Caco-2 (cell line): ENCODE measurements at regions of chr20 and their contacts with region 1.

Region 1: GRCh38 chr20:22490287-22491193 is 93.8 kb downstream of the FOXA2 start:
- DNase-seq: peak; percentile 98
- H3K4me3 ChIP-seq: peak overlapping the region; percentile 11
- H3K4me3 Mint-ChIP-seq: peak overlapping the region; percentile 68
- H3K27ac Mint-ChIP-seq: peak overlapping the region; percentile 98
- H3K4me1 ChIP-seq: peaks cover 32% of the 10 kb centered on the region
- H3K4me1 Mint-ChIP-seq: peaks cover 30% of the 10 kb centered on the region
- H3K27me3 ChIP-seq: no peaks in the 10 kb centered on the region
- H3K27me3 Mint-ChIP-seq: no peaks in the 10 kb centered on the region
- CTCF ChIP-seq: peak; percentile 11 to 30

Region 2: GRCh38 chr20:22207280-22207679 is 283.3 kb before region 1 on chr20:
- CTCF ChIA-PET with region 1: no interaction called
- POLR2A ChIA-PET with region 1: no interaction called
- intact Hi-C with region 1: no loop called
- DNase-seq: peak in 1 of 2 experiments; percentile 4
- H3K4me3 ChIP-seq: no peak overlapping the region
- H3K4me3 Mint-ChIP-seq: no peak overlapping the region
- H3K27ac Mint-ChIP-seq: no peak overlapping the region
- H3K4me1 ChIP-seq: no peaks in the 10 kb centered on the region
- H3K4me1 Mint-ChIP-seq: no peaks in the 10 kb centered on the region
- H3K27me3 ChIP-seq: no peaks in the 10 kb centered on the region
- H3K27me3 Mint-ChIP-seq: peaks cover 11% of the 10 kb centered on the region
- CTCF ChIP-seq: no peak

Region 3: DNA sequence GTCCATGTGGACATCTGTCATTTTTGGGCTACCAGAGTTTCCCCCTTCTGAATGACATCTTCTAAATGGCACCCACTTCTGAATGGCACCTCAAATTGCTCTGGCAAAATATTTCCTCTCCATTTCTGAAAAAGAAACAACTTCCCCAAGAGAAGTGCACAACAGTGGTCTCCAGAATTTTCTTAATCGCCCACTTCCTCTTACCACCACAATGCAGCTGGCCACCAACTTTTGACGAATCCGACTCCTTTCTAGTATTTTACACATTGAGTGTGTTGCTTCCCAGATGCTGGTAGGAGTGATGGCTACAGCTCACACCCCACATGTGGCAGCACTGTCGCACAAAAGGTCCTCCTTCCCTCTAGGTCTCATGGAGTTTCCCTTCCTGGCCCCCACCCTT is 122.3 kb before region 1 on chr20:
- CTCF ChIA-PET with region 1: no interaction called
- POLR2A ChIA-PET with region 1: no interaction called
- intact Hi-C with region 1: no loop called
- DNase-seq: no peak
- H3K4me3 ChIP-seq: no peak overlapping the region
- H3K4me3 Mint-ChIP-seq: no peak overlapping the region
- H3K27ac Mint-ChIP-seq: no peak overlapping the region
- H3K4me1 ChIP-seq: no peaks in the 10 kb centered on the region
- H3K4me1 Mint-ChIP-seq: no peaks in the 10 kb centered on the region
- H3K27me3 ChIP-seq: peaks cover 1% of the 10 kb centered on the region; the same call in 1 of the 2 replicates
- H3K27me3 Mint-ChIP-seq: peaks cover 2% of the 10 kb centered on the region
- CTCF ChIP-seq: no peak

Region 4: DNA sequence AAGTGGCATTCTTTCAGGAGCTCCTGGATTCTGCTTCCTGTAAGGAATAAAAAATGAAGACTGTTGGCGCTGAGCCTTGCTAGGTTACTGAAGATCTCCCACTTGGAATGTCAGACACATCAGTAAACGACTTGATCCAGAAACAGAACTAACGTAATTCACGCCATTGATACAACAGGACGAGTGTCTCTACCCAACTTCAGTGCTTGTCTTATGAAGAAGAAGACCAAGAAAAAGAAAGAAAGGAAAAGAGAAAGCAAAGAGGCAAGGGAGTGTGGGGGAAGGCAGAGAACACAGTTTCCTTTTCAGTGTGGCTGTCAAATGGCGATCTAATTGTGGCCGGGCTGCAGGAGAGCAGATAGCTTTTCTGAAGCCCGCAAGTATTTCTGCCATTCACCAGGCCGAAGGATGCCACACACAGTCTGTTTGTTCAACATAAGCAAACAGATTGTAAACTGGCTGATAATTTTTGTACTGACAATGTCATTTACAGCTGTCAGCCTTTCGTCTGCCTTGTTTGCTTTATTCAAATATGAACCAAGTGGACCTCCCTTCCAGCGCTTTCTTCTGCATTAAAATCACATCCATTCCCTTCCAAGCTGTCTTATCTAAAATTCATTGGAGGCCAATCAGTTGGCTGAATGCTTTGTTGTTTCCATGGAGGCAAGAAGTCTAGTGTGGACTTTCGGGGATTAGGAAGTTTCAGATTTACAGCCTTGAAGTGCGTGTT is 86.7 kb before region 1 on chr20:
- CTCF ChIA-PET with region 1: interaction called, 5 read pairs
- POLR2A ChIA-PET with region 1: interaction called, 9 read pairs
- intact Hi-C with region 1: loop called (anchors 1 kb)
- DNase-seq: peak; percentile 53 to 60
- H3K4me3 ChIP-seq: peak overlapping the region; percentile 24
- H3K4me3 Mint-ChIP-seq: peak overlapping the region; percentile 72
- H3K27ac Mint-ChIP-seq: peak overlapping the region; percentile 39
- H3K4me1 ChIP-seq: peaks cover 15% of the 10 kb centered on the region
- H3K4me1 Mint-ChIP-seq: peaks cover 35% of the 10 kb centered on the region
- H3K27me3 ChIP-seq: no peaks in the 10 kb centered on the region
- H3K27me3 Mint-ChIP-seq: no peaks in the 10 kb centered on the region
- CTCF ChIP-seq: no peak

Region 5: GRCh38 chr20:22511943-22512910 is 21.7 kb after region 1 on chr20:
- CTCF ChIA-PET with region 1: interaction called, 27 read pairs
- POLR2A ChIA-PET with region 1: interaction called, 49 read pairs
- intact Hi-C with region 1: loop called (anchors 1 kb)
- DNase-seq: peak; percentile 92 to 96
- H3K4me3 ChIP-seq: no peak overlapping the region
- H3K4me3 Mint-ChIP-seq: peak overlapping the region; percentile 35
- H3K27ac Mint-ChIP-seq: peak overlapping the region; percentile 50
- H3K4me1 ChIP-seq: peaks cover 71% of the 10 kb centered on the region
- H3K4me1 Mint-ChIP-seq: peaks cover 65% of the 10 kb centered on the region
- H3K27me3 ChIP-seq: no peaks in the 10 kb centered on the region
- H3K27me3 Mint-ChIP-seq: no peaks in the 10 kb centered on the region
- CTCF ChIP-seq: no peak

Region 6: GRCh38 chr20:22536956-22537756 is 46.6 kb after region 1 on chr20:
- CTCF ChIA-PET with region 1: interaction called, 3 read pairs
- POLR2A ChIA-PET with region 1: no interaction called
- intact Hi-C with region 1: loop called (anchors 1 kb)
- DNase-seq: peak; percentile 76 to 80
- H3K4me3 ChIP-seq: no peak overlapping the region
- H3K4me3 Mint-ChIP-seq: peak overlapping the region; percentile 55
- H3K27ac Mint-ChIP-seq: peak overlapping the region; percentile 87
- H3K4me1 ChIP-seq: peaks cover 39% of the 10 kb centered on the region
- H3K4me1 Mint-ChIP-seq: peaks cover 40% of the 10 kb centered on the region
- H3K27me3 ChIP-seq: no peaks in the 10 kb centered on the region
- H3K27me3 Mint-ChIP-seq: no peaks in the 10 kb centered on the region
- CTCF ChIP-seq: no peak

Region 7: GRCh38 chr20:22684072-22684762 is 193.7 kb after region 1 on chr20:
- CTCF ChIA-PET with region 1: interaction called, 6 read pairs
- POLR2A ChIA-PET with region 1: interaction called, 6 read pairs
- intact Hi-C with region 1: loop called (anchors 1 kb)
- DNase-seq: peak; percentile 81 to 86
- H3K4me3 ChIP-seq: no peak overlapping the region
- H3K4me3 Mint-ChIP-seq: no peak overlapping the region
- H3K27ac Mint-ChIP-seq: peak overlapping the region; percentile 32
- H3K4me1 ChIP-seq: peaks cover 23% of the 10 kb centered on the region
- H3K4me1 Mint-ChIP-seq: peaks cover 20% of the 10 kb centered on the region
- H3K27me3 ChIP-seq: no peaks in the 10 kb centered on the region
- H3K27me3 Mint-ChIP-seq: no peaks in the 10 kb centered on the region
- CTCF ChIP-seq: peak; percentile 89